MCF 10A (cell line): ENCODE measurements at regions of chr3 and their contacts with region 1.

Region 1: GRCh38 chr3:56251343-56251945 is 216.8 kb downstream of the ERC2 start:
- DNase-seq: peak; percentile 75
- H3K4me3 Mint-ChIP-seq: no peak overlapping the region
- H3K27ac Mint-ChIP-seq: no peak overlapping the region
- H3K4me1 Mint-ChIP-seq: no peaks in the 10 kb centered on the region
- H3K27me3 Mint-ChIP-seq: no peaks in the 10 kb centered on the region
- CTCF ChIP-seq: peak; percentile 62

Region 2: GRCh38 chr3:55042591-55042990 is 1208.9 kb before region 1 on chr3:
- CTCF ChIA-PET with region 1: no interaction called
- POLR2A ChIA-PET with region 1: no interaction called
- intact Hi-C with region 1: loop called (anchors 5 kb)
- DNase-seq: peak; percentile 26
- H3K4me3 Mint-ChIP-seq: no peak overlapping the region
- H3K27ac Mint-ChIP-seq: no peak overlapping the region
- H3K4me1 Mint-ChIP-seq: no peaks in the 10 kb centered on the region
- H3K27me3 Mint-ChIP-seq: no peaks in the 10 kb centered on the region
- CTCF ChIP-seq: peak; percentile 30

Region 3: GRCh38 chr3:55818485-55818884 is 433.0 kb before region 1 on chr3:
- CTCF ChIA-PET with region 1: interaction called, 4 read pairs
- POLR2A ChIA-PET with region 1: no interaction called
- intact Hi-C with region 1: loop called (anchors 5 kb)
- DNase-seq: peak; percentile 20
- H3K4me3 Mint-ChIP-seq: no peak overlapping the region
- H3K27ac Mint-ChIP-seq: no peak overlapping the region
- H3K4me1 Mint-ChIP-seq: peaks cover 5% of the 10 kb centered on the region
- H3K27me3 Mint-ChIP-seq: no peaks in the 10 kb centered on the region
- CTCF ChIP-seq: no peak

Region 4: GRCh38 chr3:56238299-56238698 is 13.1 kb before region 1 on chr3:
- CTCF ChIA-PET with region 1: interaction called, 19 read pairs
- POLR2A ChIA-PET with region 1: no interaction called
- intact Hi-C with region 1: no loop called
- DNase-seq: no peak
- H3K4me3 Mint-ChIP-seq: no peak overlapping the region
- H3K27ac Mint-ChIP-seq: no peak overlapping the region
- H3K4me1 Mint-ChIP-seq: no peaks in the 10 kb centered on the region
- H3K27me3 Mint-ChIP-seq: no peaks in the 10 kb centered on the region
- CTCF ChIP-seq: no peak